Aorta (tissue), 5 donors: ENCODE measurements at regions of chr1 and their contacts with region 1.

Region 1: DNA sequence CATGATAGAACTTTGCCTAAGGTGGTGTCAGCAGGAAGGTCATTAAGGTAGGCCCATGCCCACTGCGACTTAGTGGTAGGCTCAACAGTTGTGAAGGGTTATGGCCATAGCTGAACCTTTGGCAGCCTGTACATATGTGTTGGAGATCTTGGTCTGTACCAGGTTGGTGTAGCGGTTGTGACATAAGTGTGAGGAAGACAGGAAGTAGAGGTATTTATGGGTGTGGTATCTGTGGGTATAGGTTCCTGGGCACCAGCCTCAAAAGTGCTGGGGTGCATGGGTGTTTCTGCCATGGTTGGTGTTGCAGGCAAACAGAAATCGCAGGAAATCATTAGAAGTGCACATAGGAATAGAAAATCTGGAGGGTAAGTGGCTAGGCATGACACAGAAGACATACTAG is 18.6 kb upstream of the LRIF1 start:
- DNase-seq: no peak
- ATAC-seq: no peak
- H3K4me3 ChIP-seq: no peak overlapping the region
- H3K27ac ChIP-seq: no peak overlapping the region
- H3K4me1 ChIP-seq: no peaks in the 10 kb centered on the region
- H3K27me3 ChIP-seq: no peaks in the 10 kb centered on the region

Region 2: DNA sequence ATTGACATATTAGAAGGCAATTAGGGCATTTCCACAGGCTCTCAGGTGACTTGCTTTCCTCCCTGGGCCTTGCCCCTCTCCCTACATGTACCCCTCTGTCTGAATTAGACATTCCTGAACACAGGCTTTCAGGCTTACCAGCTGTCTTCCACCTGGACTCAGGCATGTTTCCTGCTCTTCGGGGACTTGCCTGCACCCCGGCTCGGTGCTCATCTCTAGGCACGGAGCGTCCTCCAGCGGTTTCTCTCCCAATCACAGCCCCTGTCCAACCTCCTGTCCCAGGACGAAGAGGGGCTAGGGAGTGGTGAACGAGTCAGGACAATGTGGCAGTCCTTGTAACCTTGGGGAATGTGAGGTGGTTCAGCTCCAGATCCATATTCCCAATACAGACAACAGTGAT is 527.2 kb before region 1 on chr1:
- intact Hi-C with region 1: no loop called
- DNase-seq: peak in 1 of 2 donors; percentile 21
- ATAC-seq: no peak
- H3K4me3 ChIP-seq: no peak overlapping the region
- H3K27ac ChIP-seq: no peak overlapping the region
- H3K4me1 ChIP-seq: no peaks in the 10 kb centered on the region
- H3K27me3 ChIP-seq: no peaks in the 10 kb centered on the region

Region 3: DNA sequence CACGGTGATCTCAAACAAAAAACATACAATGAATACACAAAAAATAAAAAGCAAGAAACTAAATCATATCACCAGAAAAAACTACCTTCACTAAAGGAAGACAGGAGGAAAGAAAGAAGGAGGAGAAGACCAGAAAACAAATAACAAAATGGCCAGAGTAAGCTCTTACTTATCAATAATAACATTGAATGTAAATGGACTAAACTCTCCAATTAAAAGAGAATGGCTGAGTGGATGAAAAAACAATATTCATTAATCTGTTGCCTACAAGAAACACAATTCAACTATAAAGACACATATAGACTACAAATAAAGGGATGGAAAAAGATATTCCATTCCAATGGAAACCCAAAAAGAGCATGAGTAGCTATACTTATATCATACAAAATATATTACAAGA is 45.8 kb before region 1 on chr1:
- intact Hi-C with region 1: loop called in 1 of 2 experiments (anchors 10 kb)
- DNase-seq: no peak
- ATAC-seq: no peak
- H3K4me3 ChIP-seq: no peak overlapping the region
- H3K27ac ChIP-seq: no peak overlapping the region
- H3K4me1 ChIP-seq: no peaks in the 10 kb centered on the region
- H3K27me3 ChIP-seq: no peaks in the 10 kb centered on the region

Region 4: DNA sequence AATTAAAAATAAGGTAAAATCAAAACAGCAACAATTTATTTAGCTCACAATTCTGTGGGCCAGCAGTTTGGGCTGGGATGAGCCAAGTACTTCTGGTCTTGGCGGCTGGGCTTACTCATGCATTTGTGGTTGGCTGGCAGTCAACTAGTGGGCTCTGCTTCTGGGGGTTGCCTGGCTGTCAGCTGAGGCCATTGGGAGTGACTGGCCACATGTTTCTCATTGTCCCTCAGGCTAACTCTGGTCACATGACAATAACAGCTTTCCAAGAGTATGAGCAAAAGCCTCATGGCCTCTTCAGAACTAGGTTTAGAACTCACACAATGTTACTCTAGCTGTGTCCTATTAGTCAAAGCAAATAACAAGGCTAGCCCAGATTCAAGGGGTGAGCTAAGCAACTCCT is 292.8 kb after region 1 on chr1:
- intact Hi-C with region 1: no loop called
- DNase-seq: peak in 1 of 2 donors; percentile 68
- ATAC-seq: peak; percentile 86
- H3K4me3 ChIP-seq: no peak overlapping the region
- H3K27ac ChIP-seq: no peak overlapping the region
- H3K4me1 ChIP-seq: no peaks in the 10 kb centered on the region
- H3K27me3 ChIP-seq: peaks cover 0 to 2% of the 10 kb centered on the region in 2 donors